Heart left ventricle (tissue), 16 donors: ENCODE measurements at regions of chr9 and their contacts with region 1.

Region 1: GRCh38 chr9:130927995-130928900 is 10.8 kb downstream of the FIBCD1 start:
- DNase-seq: peak; percentile 30 to 81 (median 60)
- ATAC-seq: peak in 2 of 4 donors; percentile 20 to 30
- H3K4me3 ChIP-seq: no peak overlapping the region
- H3K27ac ChIP-seq: no peak overlapping the region
- H3K4me1 ChIP-seq: peaks cover 0 to 26% (median 11%) of the 10 kb centered on the region in 12 donors
- H3K27me3 ChIP-seq: peaks cover 0 to 24% (median 3%) of the 10 kb centered on the region in 9 donors
- CTCF ChIP-seq: no peak
- POLR2A ChIP-seq: no peak

Region 2: GRCh38 chr9:130866474-130866965 is 61.7 kb before region 1 on chr9:
- intact Hi-C with region 1: loop called in 5 of 10 experiments (anchors 1 to 5 kb)
- DNase-seq: peak in 4 of 5 donors; percentile 61 to 72 (median 66)
- ATAC-seq: peak; percentile 29 to 50 (median 38)
- H3K4me3 ChIP-seq: no peak overlapping the region
- H3K27ac ChIP-seq: peak overlapping the region in 1 of 12 donors; percentile 20
- H3K4me1 ChIP-seq: peaks cover 3 to 55% (median 28%) of the 10 kb centered on the region in 12 donors
- H3K27me3 ChIP-seq: no peaks in the 10 kb centered on the region
- CTCF ChIP-seq: peak; percentile 66 to 86 (median 79)
- POLR2A ChIP-seq: no peak

Region 3: GRCh38 chr9:130872912-130873503 is 55.2 kb before region 1 on chr9:
- intact Hi-C with region 1: loop called in 8 of 10 experiments (anchors 1 to 5 kb)
- DNase-seq: peak in 4 of 5 donors; percentile 67 to 84 (median 76)
- ATAC-seq: peak; percentile 53 to 77 (median 60)
- H3K4me3 ChIP-seq: no peak overlapping the region
- H3K27ac ChIP-seq: peak overlapping the region; percentile 24 to 87 (median 68)
- H3K4me1 ChIP-seq: peaks cover 3 to 55% (median 40%) of the 10 kb centered on the region in 12 donors
- H3K27me3 ChIP-seq: no peaks in the 10 kb centered on the region
- CTCF ChIP-seq: no peak
- POLR2A ChIP-seq: no peak

Region 4: DNA sequence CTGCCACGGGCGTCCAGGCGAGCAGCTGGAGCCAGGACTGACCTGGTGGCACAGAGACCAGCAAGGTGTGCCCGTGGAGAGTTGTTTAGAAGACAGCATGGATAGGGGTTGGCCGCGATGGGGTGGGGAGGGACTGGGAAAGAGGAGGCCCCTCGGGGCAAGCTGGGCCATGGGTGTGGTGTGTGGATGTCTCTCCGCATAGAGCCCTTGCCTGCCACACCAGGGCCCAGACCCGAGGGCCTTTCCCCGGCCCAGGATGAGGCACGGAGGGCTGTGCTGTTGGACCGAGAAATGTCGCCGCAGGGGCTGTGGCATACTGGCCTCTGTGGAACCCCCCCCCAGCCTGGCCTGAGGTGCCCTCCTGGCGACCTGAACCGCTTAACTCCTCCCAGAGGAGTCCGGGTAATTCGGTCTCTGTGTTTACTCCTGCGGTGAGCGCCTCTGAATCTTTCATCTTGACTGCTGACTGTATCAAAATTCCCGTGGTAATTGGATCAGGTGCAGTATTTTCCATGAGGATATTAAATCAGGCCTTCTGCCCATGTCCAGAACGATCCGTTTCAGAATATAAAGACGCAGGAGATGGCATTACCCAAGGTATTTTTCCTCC is 58.2 kb after region 1 on chr9:
- intact Hi-C with region 1: no loop called
- DNase-seq: no peak
- ATAC-seq: no peak
- H3K4me3 ChIP-seq: no peak overlapping the region
- H3K27ac ChIP-seq: no peak overlapping the region
- H3K4me1 ChIP-seq: no peaks in the 10 kb centered on the region
- H3K27me3 ChIP-seq: peaks cover 0 to 10% (median 0%) of the 10 kb centered on the region in 9 donors
- CTCF ChIP-seq: no peak
- POLR2A ChIP-seq: no peak